ENCODE measurements at regions of chr12 and their contacts with region 1.

Region 1: DNA sequence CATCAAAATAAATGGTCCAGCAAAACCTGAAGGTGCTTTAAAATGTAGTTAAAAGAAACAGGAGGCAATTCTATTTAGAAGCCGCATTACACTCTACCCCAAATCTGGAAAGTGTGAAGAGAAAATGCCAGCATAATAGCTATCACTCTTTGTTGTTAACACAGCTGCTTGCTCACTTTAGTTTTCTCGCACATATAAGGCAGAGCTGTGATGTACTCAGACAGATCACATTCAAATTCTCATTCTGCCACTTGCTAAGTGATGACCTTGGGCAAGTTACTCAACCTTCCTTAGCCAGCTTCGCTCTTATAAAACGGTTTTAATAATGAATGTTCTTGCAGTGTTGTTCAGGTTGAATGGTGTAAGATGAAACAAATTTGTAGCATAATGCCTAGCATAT is 56.0 kb upstream of the MGAT4C start:
- DNase-seq: no peak
- ATAC-seq: peak; percentile 51 to 67
- H3K4me3 ChIP-seq: no peak overlapping the region
- H3K27ac ChIP-seq: no peak overlapping the region
- H3K4me1 ChIP-seq: no peaks in the 10 kb centered on the region
- H3K27me3 ChIP-seq: no peaks in the 10 kb centered on the region

Region 2: DNA sequence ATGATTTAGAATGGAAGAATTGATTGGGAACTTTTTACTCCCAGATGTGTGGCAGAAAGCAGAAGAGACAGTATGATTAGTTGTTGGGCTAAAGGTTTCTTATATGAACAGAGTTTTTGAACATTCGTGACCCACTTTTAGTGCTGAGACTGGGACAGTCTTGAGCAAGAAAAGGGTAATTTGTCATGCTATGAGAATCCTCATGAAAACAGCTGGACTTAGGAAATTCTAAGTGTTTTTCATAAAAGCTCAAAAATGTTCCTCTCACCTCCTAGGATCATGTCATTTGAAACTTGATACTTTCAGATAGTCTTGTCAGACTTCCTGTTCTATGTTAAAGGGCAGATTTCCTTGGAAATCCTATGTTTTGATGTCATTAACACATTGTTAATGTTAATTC is 142.2 kb before region 1 on chr12:
- intact Hi-C with region 1: no loop called
- DNase-seq: no peak
- ATAC-seq: no peak
- H3K4me3 ChIP-seq: no peak overlapping the region
- H3K27ac ChIP-seq: no peak overlapping the region
- H3K4me1 ChIP-seq: no peaks in the 10 kb centered on the region
- H3K27me3 ChIP-seq: no peaks in the 10 kb centered on the region

Region 3: DNA sequence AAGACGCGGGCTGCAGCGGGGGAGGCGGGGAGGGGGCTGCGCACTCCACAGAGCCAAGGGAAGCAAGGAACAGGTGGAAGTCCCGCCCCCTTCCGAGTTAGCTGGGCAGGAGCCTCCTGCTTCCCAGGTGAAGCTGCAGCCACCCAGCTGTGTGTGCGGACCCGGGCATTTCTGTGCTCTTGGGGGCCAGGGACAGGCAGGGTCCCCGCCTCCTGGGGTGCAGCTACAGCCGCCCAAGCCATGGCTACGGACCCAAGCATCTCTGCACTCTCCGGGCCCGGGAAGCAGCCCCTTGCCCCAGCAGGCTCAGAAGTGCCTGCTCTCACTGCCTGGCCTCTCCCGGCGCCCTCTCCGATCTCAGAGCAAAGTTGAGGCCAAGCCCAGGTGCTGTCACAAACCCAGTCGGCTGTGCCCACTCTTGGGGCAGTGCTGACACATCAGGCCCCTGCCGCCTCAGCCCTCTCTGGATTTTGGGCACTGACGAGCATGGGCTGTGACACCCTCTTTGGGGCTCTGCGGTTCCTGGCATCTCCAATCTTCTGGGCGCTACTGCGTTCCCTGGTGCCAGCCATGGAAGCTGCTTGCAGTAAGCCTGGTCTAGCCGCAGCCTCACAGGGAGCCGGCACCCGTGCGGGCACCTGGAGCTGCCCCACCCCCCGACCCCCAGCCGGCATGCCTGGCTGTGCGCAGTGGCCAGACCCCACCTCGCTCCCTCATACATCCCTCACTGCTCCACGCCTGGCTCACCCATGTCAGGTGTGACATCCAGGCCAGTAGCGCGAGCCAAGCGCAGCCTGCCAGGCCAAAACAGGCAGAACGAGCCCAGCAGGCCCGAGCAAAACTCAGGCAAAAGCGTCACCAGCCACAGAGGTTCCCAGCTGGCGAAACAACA is 47.5 kb before region 1 on chr12:
- intact Hi-C with region 1: loop called in 1 of 4 experiments (anchors 10 kb)
- DNase-seq: peak; percentile 11 to 53 (median 47)
- ATAC-seq: peak; percentile 52 to 59
- H3K4me3 ChIP-seq: peak overlapping the region; percentile 15
- H3K27ac ChIP-seq: no peak overlapping the region
- H3K4me1 ChIP-seq: no peaks in the 10 kb centered on the region
- H3K27me3 ChIP-seq: no peaks in the 10 kb centered on the region

Region 4: GRCh38 chr12:86445356-86445755 is 133.1 kb after region 1 on chr12:
- intact Hi-C with region 1: no loop called
- DNase-seq: no peak
- ATAC-seq: no peak
- H3K4me3 ChIP-seq: no peak overlapping the region
- H3K27ac ChIP-seq: no peak overlapping the region
- H3K4me1 ChIP-seq: no peaks in the 10 kb centered on the region
- H3K27me3 ChIP-seq: no peaks in the 10 kb centered on the region

Measured in right cardiac atrium (tissue), 5 donors.